ENCODE measurements at regions of chr19 and their contacts with region 1.

Region 1: DNA sequence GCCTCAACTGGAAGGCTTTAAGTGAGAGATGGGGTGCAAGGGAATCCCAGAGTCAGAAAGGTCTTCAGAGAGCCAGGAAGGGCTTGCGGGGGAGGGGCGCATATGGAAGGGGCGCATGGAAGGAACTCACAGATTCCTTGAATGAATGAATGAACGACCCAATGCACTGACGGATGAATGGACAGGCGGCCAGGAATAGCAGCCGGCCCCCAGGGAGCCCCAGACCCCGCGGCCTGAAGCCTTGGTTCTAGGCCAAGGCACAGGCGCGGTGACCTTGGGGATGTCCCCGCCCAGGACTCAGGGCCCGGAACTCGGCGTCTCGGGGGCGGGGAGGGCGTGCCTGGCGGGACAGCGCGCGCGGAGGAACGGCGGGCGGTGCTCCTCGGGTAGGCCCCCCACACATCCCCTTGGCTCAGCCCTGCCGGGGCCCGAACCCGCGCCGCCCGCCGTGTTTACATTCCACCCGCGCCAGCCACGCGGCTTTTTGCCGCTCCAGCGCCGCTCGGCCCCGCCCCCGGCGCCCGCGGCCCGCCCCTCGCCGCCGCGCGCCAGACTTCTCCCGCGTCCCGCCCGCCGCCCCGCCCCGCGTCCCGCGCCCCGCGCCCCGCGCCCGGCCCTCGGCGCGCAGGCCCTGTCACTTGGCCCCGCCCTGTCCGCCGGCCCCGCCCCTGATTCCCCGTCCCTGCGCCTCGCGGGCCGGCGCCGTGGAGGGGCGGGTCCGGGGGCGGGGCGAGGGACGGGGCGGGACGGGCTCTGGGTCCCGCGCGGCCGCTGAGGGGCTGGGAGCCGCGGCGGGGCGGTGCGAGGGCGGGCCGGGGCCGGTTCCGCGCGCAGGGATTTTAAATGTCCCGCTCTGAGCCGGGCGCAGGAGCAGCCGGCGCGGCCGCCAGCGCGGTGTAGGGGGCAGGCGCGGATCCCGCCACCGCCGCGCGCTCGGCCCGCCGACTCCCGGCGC is at the start of gene CCNE1:
- DNase-seq: peak; percentile 49 to 91
- H3K4me3 ChIP-seq: peak within 1 kb of the TSS; percentile 60
- H3K27ac ChIP-seq: no peak within 1 kb of the TSS
- H3K4me1 ChIP-seq: peaks cover 9% of the 10 kb centered on the region; the same call in 1 of the 2 replicates
- H3K27me3 ChIP-seq: no peaks in the 10 kb centered on the region
- CTCF ChIP-seq: no peak
- total RNA-seq, gene CCNE1: 8.9 and 10.6 TPM in 2 replicates

Region 2: DNA sequence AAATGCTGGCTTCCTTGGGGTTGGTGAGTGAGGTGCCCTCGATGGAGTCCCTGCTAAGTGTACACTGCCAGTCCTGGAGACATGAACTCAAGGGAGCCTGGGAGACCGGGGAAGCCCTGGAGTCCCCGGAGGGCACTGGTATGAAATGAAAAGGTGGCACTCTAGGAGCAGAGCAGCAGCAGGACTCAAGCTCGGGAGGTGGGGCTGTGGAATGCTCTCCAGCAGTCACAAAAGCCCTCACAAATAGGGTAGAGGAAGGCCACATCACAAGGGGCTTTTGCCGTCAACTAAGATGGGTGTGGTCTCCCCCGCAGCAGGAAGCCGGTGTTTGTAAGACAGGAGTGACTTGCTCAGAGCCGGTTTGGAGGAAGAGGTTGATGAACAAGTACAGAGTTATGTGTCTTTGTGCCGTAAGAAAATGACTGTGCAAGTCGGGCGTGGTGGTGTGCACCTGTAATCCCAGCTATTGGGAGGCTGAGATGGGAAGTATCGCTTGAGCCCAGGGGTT is 19.7 kb after region 1 on chr19:
- CTCF ChIA-PET with region 1: no interaction called
- POLR2A ChIA-PET with region 1: no interaction called
- intact Hi-C with region 1: loop called (anchors 2 kb)
- DNase-seq: peak; percentile 66 to 98
- H3K4me3 ChIP-seq: peak overlapping the region; percentile 44; the same call in 1 of the 2 replicates
- H3K27ac ChIP-seq: peak overlapping the region; percentile 85
- H3K4me1 ChIP-seq: peaks cover 57% of the 10 kb centered on the region
- H3K27me3 ChIP-seq: no peaks in the 10 kb centered on the region
- CTCF ChIP-seq: no peak

Region 3: GRCh38 chr19:30163363-30164062 is 352.1 kb after region 1 on chr19:
- CTCF ChIA-PET with region 1: no interaction called
- POLR2A ChIA-PET with region 1: no interaction called
- intact Hi-C with region 1: no loop called
- DNase-seq: no peak
- H3K4me3 ChIP-seq: no peak overlapping the region
- H3K27ac ChIP-seq: no peak overlapping the region
- H3K4me1 ChIP-seq: no peaks in the 10 kb centered on the region
- H3K27me3 ChIP-seq: peaks cover 79% of the 10 kb centered on the region
- CTCF ChIP-seq: no peak

Measured in PC-9 (cell line).